PC-9 (cell line): ENCODE measurements at regions of chr9 and their contacts with region 1.

Region 1: GRCh38 chr9:73149371-73150067 is 2.1 kb upstream of the ANXA1 start:
- DNase-seq: peak in 1 of 2 experiments; percentile 81
- H3K4me3 ChIP-seq: no peak overlapping the region; the same call in 1 of the 2 replicates
- H3K27ac ChIP-seq: peak overlapping the region; percentile 86
- H3K4me1 ChIP-seq: peaks cover 67% of the 10 kb centered on the region
- H3K27me3 ChIP-seq: no peaks in the 10 kb centered on the region
- CTCF ChIP-seq: no peak

Region 2: GRCh38 chr9:73104342-73104741 is 45.2 kb before region 1 on chr9:
- CTCF ChIA-PET with region 1: interaction called, 3 read pairs
- POLR2A ChIA-PET with region 1: interaction called, 3 read pairs
- intact Hi-C with region 1: loop called (anchors 2 kb)
- DNase-seq: no peak
- H3K4me3 ChIP-seq: no peak overlapping the region
- H3K27ac ChIP-seq: no peak overlapping the region
- H3K4me1 ChIP-seq: no peaks in the 10 kb centered on the region
- H3K27me3 ChIP-seq: no peaks in the 10 kb centered on the region
- CTCF ChIP-seq: no peak

Region 3: DNA sequence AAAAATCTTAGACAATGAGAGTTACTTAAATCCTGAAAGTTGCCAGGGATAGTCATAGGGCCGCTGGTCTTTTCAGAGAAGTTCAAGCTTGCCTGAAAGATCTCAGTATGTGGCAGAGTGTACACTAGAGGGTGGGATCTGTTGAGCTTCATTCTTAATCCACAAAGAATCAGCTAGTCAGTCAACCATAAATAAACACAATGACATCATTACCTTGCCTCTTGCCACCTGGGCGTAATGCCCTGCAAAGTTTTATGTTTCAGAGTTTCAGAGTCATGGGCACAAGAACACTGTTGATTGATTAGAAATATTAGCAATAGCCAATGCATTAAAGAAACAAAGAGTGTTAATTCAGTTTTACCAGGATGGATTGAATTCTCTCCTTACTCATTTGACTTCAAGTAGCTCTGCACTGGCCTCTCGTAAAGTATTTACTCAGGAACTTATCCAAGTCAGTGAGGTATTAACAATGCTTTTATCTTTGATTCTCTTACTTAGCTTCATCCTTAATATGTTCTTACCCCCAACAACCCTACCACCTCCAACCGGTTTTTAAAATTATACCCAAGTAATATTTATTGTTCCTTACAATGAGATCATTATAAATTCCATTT is 12.1 kb before region 1 on chr9:
- CTCF ChIA-PET with region 1: interaction called, 6 read pairs
- POLR2A ChIA-PET with region 1: interaction called, 10 read pairs
- intact Hi-C with region 1: loop called (anchors 1 kb)
- DNase-seq: no peak
- H3K4me3 ChIP-seq: no peak overlapping the region
- H3K27ac ChIP-seq: no peak overlapping the region
- H3K4me1 ChIP-seq: peaks cover 32% of the 10 kb centered on the region
- H3K27me3 ChIP-seq: no peaks in the 10 kb centered on the region
- CTCF ChIP-seq: no peak

Region 4: DNA sequence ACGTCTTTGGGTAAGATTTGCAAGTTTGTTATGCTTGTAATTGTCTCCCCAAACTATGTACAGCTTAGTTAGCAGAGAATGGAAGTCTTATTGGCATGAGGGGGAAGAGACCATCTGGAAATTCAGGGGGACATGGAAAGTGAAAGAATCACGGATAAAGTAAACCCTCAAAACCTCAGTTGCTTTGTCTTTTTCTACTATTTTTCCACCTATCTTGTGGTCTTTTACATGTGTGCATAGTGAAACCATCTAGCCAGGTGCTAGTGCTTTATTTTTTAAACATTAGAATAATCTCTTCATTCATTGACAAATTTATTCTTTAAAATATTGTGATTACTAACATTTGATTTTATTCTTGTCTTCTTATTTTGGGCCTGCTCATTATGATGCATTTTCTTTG is 906.5 kb after region 1 on chr9:
- CTCF ChIA-PET with region 1: no interaction called
- POLR2A ChIA-PET with region 1: no interaction called
- intact Hi-C with region 1: no loop called
- DNase-seq: no peak
- H3K4me3 ChIP-seq: no peak overlapping the region
- H3K27ac ChIP-seq: no peak overlapping the region
- H3K4me1 ChIP-seq: no peaks in the 10 kb centered on the region
- H3K27me3 ChIP-seq: no peaks in the 10 kb centered on the region
- CTCF ChIP-seq: no peak